ENCODE measurements at regions of chr3 and their contacts with region 1.

Region 1: DNA sequence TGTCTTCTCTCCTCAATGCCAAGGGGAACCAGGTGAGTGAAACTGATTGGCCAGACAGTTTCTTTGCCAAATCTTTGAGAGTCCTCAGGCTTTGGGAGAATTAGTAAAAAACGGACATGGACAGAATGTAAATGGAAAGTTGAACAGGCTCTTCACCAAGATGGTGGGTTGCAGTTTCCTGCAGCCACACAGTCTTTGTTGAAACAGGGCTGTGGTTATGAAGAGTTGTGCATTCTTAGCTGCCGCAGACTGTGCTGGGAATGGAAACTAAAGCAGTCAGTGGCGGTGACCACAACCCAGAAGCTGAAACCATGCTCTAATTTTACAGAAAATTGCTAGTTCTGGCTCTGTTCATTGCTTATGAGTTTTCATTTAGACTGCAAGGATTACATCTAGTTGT is 42.1 kb upstream of the TASOR start:
- DNase-seq: peak; percentile 56 to 77
- ATAC-seq: peak; percentile 69 to 94 (median 76)
- H3K4me3 ChIP-seq: no peak overlapping the region
- H3K4me3 Mint-ChIP-seq: peak overlapping the region; percentile 81
- H3K27ac ChIP-seq: peak overlapping the region; percentile 75
- H3K27ac Mint-ChIP-seq: peak overlapping the region; percentile 88 to 89
- H3K4me1 ChIP-seq: peaks cover 31% of the 10 kb centered on the region
- H3K4me1 Mint-ChIP-seq: peaks cover 49 to 70% of the 10 kb centered on the region in 2 donors
- H3K27me3 ChIP-seq: no peaks in the 10 kb centered on the region
- H3K27me3 Mint-ChIP-seq: no peaks in the 10 kb centered on the region
- CTCF ChIP-seq: no peak

Region 2: GRCh38 chr3:56536735-56537134 is 188.4 kb before region 1 on chr3:
- intact Hi-C with region 1: no loop called
- DNase-seq: no peak
- ATAC-seq: no peak
- H3K4me3 ChIP-seq: no peak overlapping the region
- H3K4me3 Mint-ChIP-seq: no peak overlapping the region
- H3K27ac ChIP-seq: no peak overlapping the region
- H3K27ac Mint-ChIP-seq: no peak overlapping the region
- H3K4me1 ChIP-seq: no peaks in the 10 kb centered on the region
- H3K4me1 Mint-ChIP-seq: no peaks in the 10 kb centered on the region
- H3K27me3 ChIP-seq: no peaks in the 10 kb centered on the region
- H3K27me3 Mint-ChIP-seq: peaks cover 19 to 39% of the 10 kb centered on the region in 2 donors
- CTCF ChIP-seq: no peak

Region 3: DNA sequence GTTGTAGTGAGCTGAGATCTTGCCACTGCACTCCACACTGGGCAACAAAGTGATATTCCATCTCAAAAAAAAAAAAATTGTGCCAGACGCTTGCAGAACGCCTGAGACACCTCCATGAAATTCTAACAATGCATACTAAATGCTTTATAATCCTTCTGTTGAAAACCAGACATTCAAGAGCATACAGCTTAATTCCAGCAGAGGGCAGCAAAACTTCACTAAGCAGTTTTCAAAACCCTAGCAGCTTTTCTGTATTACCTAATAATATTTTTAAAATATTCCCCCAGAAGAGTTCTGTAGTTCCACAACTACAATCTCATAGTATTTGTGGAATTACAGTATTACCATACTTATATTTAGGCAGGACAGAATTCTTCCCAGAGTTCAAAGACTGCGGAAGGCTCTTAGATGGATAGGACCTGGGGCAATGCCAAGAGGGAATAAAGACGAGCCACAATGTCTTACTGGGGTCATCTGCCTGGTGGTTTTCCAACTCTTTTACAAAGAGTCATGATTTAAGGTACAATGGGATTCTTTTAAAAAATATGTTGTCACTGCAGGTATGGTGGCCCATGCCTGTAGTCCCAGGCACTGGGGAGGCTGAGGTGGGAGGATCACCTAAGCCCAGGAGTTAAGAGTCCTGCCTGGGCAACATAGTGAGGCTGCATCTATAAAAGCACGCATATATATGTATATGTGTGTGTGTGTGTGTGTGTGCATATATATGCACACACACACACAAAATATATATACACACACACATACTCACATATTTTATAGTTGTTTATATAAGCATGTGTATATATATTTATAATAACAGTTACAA is 22.5 kb before region 1 on chr3:
- intact Hi-C with region 1: loop called (anchors 2 kb)
- DNase-seq: peak in 1 of 2 donors; percentile 89
- ATAC-seq: peak; percentile 77 to 83 (median 82)
- H3K4me3 ChIP-seq: no peak overlapping the region
- H3K4me3 Mint-ChIP-seq: no peak overlapping the region
- H3K27ac ChIP-seq: no peak overlapping the region
- H3K27ac Mint-ChIP-seq: peak overlapping the region in 1 of 2 donors; percentile 50
- H3K4me1 ChIP-seq: peaks cover 12% of the 10 kb centered on the region
- H3K4me1 Mint-ChIP-seq: peaks cover 16% of the 10 kb centered on the region in 2 donors
- H3K27me3 ChIP-seq: no peaks in the 10 kb centered on the region
- H3K27me3 Mint-ChIP-seq: no peaks in the 10 kb centered on the region
- CTCF ChIP-seq: peak; percentile 89

Region 4: GRCh38 chr3:56796202-56796601 is 71.0 kb after region 1 on chr3:
- intact Hi-C with region 1: loop called (anchors 2 kb)
- DNase-seq: peak in 1 of 2 donors; percentile 47
- ATAC-seq: peak; percentile 36 to 48 (median 43)
- H3K4me3 ChIP-seq: no peak overlapping the region
- H3K4me3 Mint-ChIP-seq: peak overlapping the region; percentile 90
- H3K27ac ChIP-seq: peak overlapping the region; percentile 65
- H3K27ac Mint-ChIP-seq: peak overlapping the region; percentile 92
- H3K4me1 ChIP-seq: peaks cover 67% of the 10 kb centered on the region
- H3K4me1 Mint-ChIP-seq: peaks cover 77 to 86% of the 10 kb centered on the region in 2 donors
- H3K27me3 ChIP-seq: no peaks in the 10 kb centered on the region
- H3K27me3 Mint-ChIP-seq: no peaks in the 10 kb centered on the region
- CTCF ChIP-seq: no peak

Measured in natural killer cell (primary cell).